ENCODE measurements at regions of chr3 and their contacts with region 1.

Region 1: GRCh38 chr3:119891944-119892721 is 110.2 kb downstream of the NR1I2 start:
- DNase-seq: peak; percentile 8 to 38
- H3K4me3 ChIP-seq: no peak overlapping the region
- H3K27ac ChIP-seq: no peak overlapping the region
- H3K4me1 ChIP-seq: peaks cover 0 to 7% of the 10 kb centered on the region in 2 donors
- H3K27me3 ChIP-seq: no peaks in the 10 kb centered on the region
- CTCF ChIP-seq: peak; percentile 37 to 88 (median 66)
- POLR2A ChIP-seq: no peak

Region 2: DNA sequence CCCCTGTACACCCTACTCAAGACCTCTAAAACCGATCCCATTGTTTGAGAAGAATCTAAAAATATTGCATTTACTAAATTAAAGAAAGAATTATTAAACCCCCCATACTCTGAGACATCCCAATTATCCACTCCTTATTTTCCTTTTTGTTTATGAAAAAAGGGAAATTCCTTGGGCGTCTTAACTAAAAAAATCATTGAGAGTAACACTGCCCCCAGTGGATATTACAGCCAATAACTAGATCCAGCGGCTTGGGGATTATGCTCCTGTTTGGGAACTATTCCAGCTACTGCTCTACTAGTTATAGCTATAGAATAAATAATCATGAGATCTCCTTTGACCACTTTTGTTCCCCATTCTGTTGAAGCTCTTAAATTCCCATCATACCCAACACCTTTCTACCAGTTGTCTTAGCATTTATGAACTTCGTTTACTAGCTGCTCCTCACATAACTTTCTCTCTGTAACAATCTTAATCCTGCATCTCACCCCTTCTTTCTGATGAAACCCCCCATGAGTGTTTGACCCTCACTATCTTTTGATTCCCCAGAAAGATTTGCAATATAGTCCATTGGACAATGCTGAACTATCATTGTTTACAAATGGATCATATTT is 202.0 kb before region 1 on chr3:
- intact Hi-C with region 1: no loop called
- DNase-seq: no peak
- H3K4me3 ChIP-seq: no peak overlapping the region
- H3K27ac ChIP-seq: no peak overlapping the region
- H3K4me1 ChIP-seq: no peaks in the 10 kb centered on the region
- H3K27me3 ChIP-seq: no peaks in the 10 kb centered on the region
- CTCF ChIP-seq: peak; percentile 31 to 68 (median 38)
- POLR2A ChIP-seq: no peak

Region 3: GRCh38 chr3:120013481-120013880 is 121.3 kb after region 1 on chr3:
- intact Hi-C with region 1: no loop called
- DNase-seq: no peak
- H3K4me3 ChIP-seq: no peak overlapping the region
- H3K27ac ChIP-seq: peak overlapping the region in 1 of 3 donors; percentile 31
- H3K4me1 ChIP-seq: peaks cover 22 to 53% of the 10 kb centered on the region in 2 donors
- H3K27me3 ChIP-seq: no peaks in the 10 kb centered on the region
- CTCF ChIP-seq: no peak
- POLR2A ChIP-seq: no peak

Region 4: GRCh38 chr3:120102674-120103073 is 210.5 kb after region 1 on chr3:
- intact Hi-C with region 1: loop called (anchors 10 kb)
- DNase-seq: peak; percentile 45 to 63
- H3K4me3 ChIP-seq: no peak overlapping the region
- H3K27ac ChIP-seq: no peak overlapping the region
- H3K4me1 ChIP-seq: peaks cover 0 to 6% of the 10 kb centered on the region in 2 donors
- H3K27me3 ChIP-seq: no peaks in the 10 kb centered on the region
- CTCF ChIP-seq: peak in 1 of 6 experiments; percentile 29
- POLR2A ChIP-seq: no peak

Region 5: DNA sequence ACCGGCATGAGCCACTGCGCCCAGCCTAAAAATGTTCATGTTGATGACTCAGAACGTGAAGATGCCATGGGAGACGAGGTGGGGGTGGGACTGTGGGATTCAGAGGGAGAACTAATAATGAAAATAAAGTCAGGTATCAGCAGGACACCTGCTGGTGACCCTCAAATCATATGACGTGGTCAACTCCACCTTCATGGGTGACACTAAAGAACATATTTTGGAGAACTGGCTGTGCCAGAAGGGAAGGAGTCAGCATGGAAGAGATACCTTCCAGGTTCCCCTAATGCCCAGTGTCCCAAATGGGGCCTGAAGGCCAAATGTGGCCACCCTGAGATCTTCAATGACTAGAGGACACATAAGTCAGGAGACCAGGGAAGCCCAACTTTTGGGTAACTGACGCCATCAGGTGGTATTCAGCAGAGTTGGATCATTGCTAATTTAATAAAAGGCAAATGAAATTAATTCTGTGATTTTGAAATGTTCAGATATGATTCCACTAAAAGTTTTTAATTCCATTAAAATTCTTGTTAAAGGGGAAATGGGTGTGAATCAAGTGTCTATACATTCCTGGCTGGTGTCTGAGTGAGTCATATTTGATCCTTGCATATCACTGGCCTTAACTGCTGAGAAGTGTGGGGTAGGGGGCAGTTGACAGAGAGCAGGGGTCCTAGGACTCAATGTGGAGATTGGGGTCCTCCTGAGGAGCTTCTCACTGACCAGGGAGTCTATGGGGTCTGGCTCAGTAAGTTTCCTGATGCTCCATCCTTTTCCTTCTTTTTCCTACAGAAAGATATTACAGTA is 290.8 kb after region 1 on chr3:
- intact Hi-C with region 1: loop called (anchors 10 kb)
- DNase-seq: peak; percentile 13 to 21
- H3K4me3 ChIP-seq: no peak overlapping the region
- H3K27ac ChIP-seq: no peak overlapping the region
- H3K4me1 ChIP-seq: peaks cover 3% of the 10 kb centered on the region in 2 donors
- H3K27me3 ChIP-seq: no peaks in the 10 kb centered on the region
- CTCF ChIP-seq: peak in 4 of 6 experiments; percentile 14 to 41 (median 36)
- POLR2A ChIP-seq: no peak

Measured in thyroid gland (tissue), 4 donors.